ENCODE measurements at regions of chr9 and their contacts with region 1.

Region 1: DNA sequence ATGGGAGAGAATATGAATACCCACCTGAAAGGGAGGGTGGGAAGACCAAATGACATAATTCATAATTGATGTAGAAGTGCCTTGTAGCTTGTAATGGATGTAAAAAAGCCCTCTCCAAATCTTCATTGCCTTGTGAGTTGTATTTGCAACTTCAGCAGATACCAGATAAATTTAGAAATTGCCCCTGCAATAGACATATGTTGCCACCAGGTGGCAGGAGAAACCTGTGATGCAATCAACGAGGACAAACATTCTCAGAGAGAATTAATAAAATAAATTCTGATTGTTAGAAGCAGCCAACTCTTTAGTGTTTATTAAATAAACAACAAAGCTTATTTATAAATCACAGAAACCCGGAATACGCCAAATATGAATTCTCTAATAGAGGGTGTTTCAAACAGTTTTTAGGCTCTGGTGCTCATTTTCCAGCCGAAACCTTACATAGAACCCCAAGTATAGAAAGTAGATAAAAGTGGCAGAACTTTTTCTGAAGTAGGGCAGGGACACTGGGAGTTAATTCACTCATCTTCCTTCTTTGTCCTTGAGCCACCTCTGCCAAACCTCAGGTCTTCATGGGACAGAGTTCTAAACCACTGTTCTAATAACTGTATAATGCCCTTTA is 147.8 kb downstream of the TMEM38B start:
- DNase-seq: peak; percentile 30

Region 2: DNA sequence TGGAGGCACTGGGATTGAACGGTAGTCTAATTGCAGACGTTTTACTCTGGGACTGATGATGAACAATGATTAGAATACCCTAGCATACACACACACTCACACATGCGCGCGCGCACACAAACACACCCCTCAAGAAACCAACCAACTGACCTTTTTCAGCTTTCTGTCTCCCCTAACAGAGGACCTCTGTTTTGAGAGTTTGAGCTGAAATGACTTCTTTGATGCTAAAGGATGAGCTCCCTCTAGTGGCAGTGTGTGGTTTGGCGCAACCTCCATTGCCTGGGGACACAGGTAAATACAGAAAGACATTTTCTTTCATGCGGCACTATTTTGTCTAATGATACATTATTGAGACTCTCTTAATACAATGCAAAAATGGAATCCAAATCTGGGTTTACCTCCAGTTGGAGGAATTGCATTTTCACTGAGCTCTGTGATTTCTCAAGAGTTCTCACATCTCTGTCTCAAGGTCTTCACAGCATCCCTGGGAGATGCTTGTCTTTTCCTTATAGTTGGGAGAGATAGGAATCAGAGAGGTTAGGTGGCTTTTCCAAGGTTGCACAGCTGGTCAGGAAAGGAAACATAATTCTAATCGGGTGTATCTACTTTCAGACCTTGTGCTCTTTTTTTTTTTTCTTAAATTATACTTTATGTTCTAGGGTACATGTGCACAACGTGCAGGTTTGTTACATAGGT is 39.7 kb after region 1 on chr9:
- CTCF ChIA-PET with region 1: interaction called, 24 read pairs
- POLR2A ChIA-PET with region 1: no interaction called
- DNase-seq: peak; percentile 67

Measured in HEK293T (cell line).